Dendritic cell treated with granulocyte-macrophage colony-stimulating factor and Interleukin-4, amounts not matched to agents 40 ng/mL and 50 ng/mL, for 4 days (primary cell): ENCODE measurements at regions of chr17 and their contacts with region 1.

Region 1: DNA sequence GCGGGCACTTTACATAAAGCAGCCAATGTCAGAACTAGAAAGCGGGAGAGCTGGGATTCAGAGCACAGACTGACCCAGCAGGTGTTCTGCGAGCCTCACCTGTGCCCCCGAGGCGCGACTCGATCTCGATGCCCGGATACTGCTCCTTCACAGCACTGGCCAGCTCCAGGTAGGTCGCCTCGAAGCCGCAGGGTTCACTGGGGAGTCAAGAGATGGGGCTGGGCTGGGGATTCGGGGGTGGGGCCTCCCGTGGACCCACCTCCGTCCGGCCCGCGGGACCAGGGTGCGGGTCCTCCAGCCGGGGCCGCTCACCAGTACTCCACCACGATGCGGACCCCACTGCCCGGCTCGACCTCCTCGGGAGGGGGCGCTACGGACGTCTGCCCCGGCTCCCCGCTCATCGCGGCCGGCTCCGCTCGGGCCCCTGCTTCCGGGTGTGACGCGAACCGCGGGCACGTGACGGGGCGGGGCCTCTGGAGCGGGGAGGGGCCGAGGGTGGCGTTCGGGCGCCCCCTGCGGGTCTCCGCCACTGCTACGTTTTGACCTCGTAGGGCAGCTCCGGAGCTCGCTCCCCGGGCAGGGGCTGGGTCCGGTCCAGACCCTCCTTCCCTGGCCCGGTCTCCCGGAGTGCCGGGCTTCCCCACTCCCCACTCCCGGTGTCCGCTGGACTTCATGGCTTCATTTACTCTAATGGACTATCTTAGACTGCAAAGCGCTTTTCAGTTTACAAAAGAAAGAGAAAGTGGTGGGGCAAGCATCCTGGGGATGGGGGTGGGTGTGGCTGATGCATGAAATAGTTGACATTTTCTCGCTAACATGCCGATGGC is at the start of gene MIEN1:
- H3K4me3 Mint-ChIP-seq: peak within 1 kb of the TSS; percentile 83
- H3K27ac Mint-ChIP-seq: peak within 1 kb of the TSS; percentile 81
- H3K4me1 Mint-ChIP-seq: peaks cover 24% of the 10 kb centered on the region
- H3K27me3 Mint-ChIP-seq: peaks cover 19% of the 10 kb centered on the region

Region 2: DNA sequence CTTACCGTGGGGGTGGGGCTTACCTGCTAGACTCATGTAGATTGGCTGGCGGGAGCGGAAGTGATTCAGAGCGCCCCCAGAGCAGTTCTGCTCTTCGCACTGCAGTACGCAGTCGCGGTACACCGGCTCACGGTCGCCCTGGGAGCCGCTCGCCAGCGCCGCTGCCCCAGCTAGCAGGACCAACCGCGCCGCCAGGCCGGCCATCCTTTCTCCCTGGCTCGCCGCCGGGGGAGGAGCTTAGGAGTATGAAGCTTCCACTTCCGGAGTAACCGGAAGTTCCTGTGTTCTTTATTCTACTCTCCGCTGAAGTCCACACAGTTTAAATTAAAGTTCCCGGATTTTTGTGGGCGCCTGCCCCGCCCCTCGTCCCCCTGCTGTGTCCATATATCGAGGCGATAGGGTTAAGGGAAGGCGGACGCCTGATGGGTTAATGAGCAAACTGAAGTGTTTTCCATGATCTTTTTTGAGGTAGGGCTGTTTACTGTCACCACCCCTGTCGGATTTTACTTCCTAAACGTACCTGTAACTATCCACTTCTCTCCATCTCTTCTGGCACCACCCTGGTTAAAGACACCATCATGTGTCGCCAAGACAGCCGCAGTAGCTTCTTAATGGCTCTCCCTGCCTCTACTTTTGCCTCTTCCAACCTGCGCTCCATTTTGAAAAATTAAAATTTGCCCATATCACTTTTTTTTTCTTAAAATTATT is 42.3 kb before region 1 on chr17 and contains the start of gene PGAP3:
- intact Hi-C with region 1: loop called (anchors 1 kb)
- H3K4me3 Mint-ChIP-seq: peak within 1 kb of the TSS; percentile 84
- H3K27ac Mint-ChIP-seq: peak within 1 kb of the TSS; percentile 84
- H3K4me1 Mint-ChIP-seq: peaks cover 21% of the 10 kb centered on the region
- H3K27me3 Mint-ChIP-seq: peaks cover 5% of the 10 kb centered on the region

Region 3: DNA sequence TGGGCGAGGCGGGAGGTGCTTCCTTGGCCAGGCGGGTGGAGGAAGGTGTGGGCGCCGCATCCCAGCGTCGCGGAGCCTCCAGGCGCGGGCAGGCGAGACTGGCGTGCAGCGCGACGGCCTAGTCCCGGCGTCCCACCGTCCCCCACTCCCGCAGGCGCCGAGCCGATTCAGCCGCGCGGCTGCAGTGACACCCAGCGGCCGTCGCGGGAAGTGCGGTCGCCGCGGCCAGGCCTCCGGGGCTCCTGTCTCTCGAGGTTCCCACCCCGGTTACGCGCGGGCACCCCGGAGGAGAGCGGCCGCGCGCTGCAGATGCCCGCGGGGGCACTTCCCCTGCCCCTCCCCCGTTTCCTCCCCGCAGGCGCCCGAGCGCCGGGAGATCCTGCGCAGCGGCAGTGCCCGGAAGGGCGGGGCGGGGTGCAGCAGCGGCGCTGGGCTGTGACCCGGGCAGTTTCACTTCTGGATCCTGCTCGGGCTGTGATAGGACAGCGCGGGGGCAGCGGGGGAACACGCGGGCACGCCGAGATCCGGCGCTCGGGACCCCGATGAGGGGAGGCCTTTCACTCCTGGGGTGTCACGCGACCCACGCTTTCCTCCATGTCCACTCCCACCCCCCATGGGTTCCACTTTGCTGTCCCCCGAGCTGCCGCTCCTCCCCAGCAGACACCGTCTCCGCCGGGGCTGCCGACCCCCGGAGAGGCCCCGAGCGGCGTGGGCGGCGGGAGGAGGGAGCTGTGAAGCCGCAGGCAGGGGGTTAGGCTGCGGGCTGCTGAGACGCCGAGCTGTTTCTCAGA is 24.0 kb after region 1 on chr17:
- intact Hi-C with region 1: loop called (anchors 1 kb)
- H3K4me3 Mint-ChIP-seq: peak overlapping the region; percentile 71
- H3K27ac Mint-ChIP-seq: peak overlapping the region; percentile 90
- H3K4me1 Mint-ChIP-seq: peaks cover 55% of the 10 kb centered on the region
- H3K27me3 Mint-ChIP-seq: peaks cover 16% of the 10 kb centered on the region